Caco-2 (cell line): ENCODE measurements at regions of chr10 and their contacts with region 1.

Region 1: DNA sequence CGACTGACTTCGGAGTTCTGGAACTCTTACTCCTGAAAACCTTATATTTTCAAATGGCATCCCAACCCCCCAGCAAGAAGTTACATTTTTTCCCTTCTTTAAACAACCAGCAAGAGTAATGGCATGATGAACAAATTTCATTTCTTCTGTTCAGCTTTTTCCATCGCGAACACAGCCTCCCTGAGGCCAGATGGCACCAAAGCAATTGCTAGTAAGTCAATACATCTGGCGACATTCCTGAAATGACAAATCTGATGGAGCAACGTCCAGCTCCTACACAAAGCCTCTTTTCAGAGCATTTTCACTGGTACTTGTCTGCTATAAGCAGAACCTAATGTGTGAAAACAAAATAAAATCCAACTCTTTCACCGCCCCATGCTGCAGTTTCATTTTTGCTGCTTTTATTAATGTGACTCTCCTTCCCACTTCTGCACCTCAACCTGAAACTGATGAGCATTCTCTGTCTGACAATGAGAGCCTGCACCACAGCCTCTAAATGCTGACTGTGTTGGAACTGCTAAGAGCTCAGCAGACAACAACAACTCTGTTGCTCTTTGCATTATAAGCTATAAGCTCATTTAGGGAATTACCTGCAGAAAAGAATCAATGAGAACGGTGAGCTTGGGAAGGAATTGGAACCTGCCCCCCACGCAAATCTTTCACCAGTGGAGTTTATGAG is 229.8 kb downstream of the FGFR2 start:
- DNase-seq: peak; percentile 81 to 83
- H3K4me3 ChIP-seq: peak overlapping the region; percentile 7; the same call in 1 of the 2 replicates
- H3K4me3 Mint-ChIP-seq: peak overlapping the region; percentile 71
- H3K27ac Mint-ChIP-seq: peak overlapping the region; percentile 87
- H3K4me1 ChIP-seq: peaks cover 49% of the 10 kb centered on the region
- H3K4me1 Mint-ChIP-seq: peaks cover 43% of the 10 kb centered on the region
- H3K27me3 ChIP-seq: no peaks in the 10 kb centered on the region
- H3K27me3 Mint-ChIP-seq: no peaks in the 10 kb centered on the region
- CTCF ChIP-seq: peak in 1 of 2 experiments; percentile 22

Region 2: GRCh38 chr10:121096617-121097461 is 271.6 kb before region 1 on chr10:
- CTCF ChIA-PET with region 1: no interaction called
- POLR2A ChIA-PET with region 1: no interaction called
- intact Hi-C with region 1: loop called (anchors 5 kb)
- DNase-seq: peak; percentile 86 to 87
- H3K4me3 ChIP-seq: no peak overlapping the region
- H3K4me3 Mint-ChIP-seq: peak overlapping the region; percentile 48
- H3K27ac Mint-ChIP-seq: peak overlapping the region; percentile 90
- H3K4me1 ChIP-seq: peaks cover 51% of the 10 kb centered on the region
- H3K4me1 Mint-ChIP-seq: peaks cover 38% of the 10 kb centered on the region
- H3K27me3 ChIP-seq: no peaks in the 10 kb centered on the region
- H3K27me3 Mint-ChIP-seq: no peaks in the 10 kb centered on the region
- CTCF ChIP-seq: no peak

Region 3: DNA sequence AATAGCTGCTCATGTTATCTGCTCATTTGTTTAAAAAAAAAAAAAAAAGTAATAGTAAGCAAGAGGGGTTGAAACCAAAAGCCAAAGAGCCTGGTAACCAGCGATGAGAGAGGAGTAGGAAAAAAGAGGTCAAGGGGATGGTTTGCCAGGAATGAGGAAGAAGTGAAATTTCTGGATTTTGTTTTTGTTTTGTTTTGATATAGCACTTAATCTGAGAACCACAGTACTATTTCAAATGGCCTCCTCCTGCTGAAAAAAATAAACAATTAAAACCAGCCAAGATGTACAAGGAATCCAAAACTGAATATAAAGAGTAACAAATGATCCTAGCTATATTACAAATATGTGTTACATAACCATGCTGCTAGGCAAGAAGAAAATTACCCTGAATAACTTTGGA is 16.6 kb after region 1 on chr10:
- CTCF ChIA-PET with region 1: no interaction called
- POLR2A ChIA-PET with region 1: no interaction called
- intact Hi-C with region 1: no loop called
- DNase-seq: no peak
- H3K4me3 ChIP-seq: no peak overlapping the region
- H3K4me3 Mint-ChIP-seq: no peak overlapping the region
- H3K27ac Mint-ChIP-seq: no peak overlapping the region
- H3K4me1 ChIP-seq: peaks cover 7% of the 10 kb centered on the region
- H3K4me1 Mint-ChIP-seq: peaks cover 3% of the 10 kb centered on the region
- H3K27me3 ChIP-seq: no peaks in the 10 kb centered on the region
- H3K27me3 Mint-ChIP-seq: no peaks in the 10 kb centered on the region
- CTCF ChIP-seq: no peak

Region 4: DNA sequence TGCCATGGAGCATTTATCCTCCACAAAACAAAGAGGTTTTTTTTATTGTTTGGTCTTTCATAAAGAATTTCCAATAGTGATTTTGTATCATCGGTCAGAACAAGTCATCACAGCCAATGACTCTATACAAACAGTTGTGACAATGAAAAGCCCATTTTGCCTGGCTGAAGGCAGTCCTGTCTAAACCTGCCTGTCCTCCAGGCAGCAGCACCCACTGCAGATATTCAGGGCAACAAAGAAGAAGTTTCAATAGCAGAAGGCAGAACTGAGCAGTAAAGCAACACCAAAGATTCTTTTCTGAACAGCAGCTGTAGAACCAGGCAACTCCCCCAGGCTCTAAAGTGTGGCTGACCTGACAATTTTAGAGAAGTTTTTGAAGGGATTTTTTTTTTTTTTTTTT is 60.4 kb after region 1 on chr10:
- CTCF ChIA-PET with region 1: interaction called, 3 read pairs
- POLR2A ChIA-PET with region 1: no interaction called
- intact Hi-C with region 1: loop called (anchors 1 kb)
- DNase-seq: peak; percentile 48 to 49
- H3K4me3 ChIP-seq: no peak overlapping the region
- H3K4me3 Mint-ChIP-seq: no peak overlapping the region
- H3K27ac Mint-ChIP-seq: no peak overlapping the region
- H3K4me1 ChIP-seq: peaks cover 51% of the 10 kb centered on the region
- H3K4me1 Mint-ChIP-seq: peaks cover 28% of the 10 kb centered on the region
- H3K27me3 ChIP-seq: no peaks in the 10 kb centered on the region
- H3K27me3 Mint-ChIP-seq: no peaks in the 10 kb centered on the region
- CTCF ChIP-seq: peak in 1 of 2 experiments; percentile 15

Region 5: GRCh38 chr10:121500674-121501332 is 132.3 kb after region 1 on chr10:
- CTCF ChIA-PET with region 1: no interaction called
- POLR2A ChIA-PET with region 1: no interaction called
- intact Hi-C with region 1: loop called (anchors 2 kb)
- DNase-seq: peak; percentile 89 to 94
- H3K4me3 ChIP-seq: no peak overlapping the region
- H3K4me3 Mint-ChIP-seq: peak overlapping the region; percentile 56
- H3K27ac Mint-ChIP-seq: peak overlapping the region; percentile 90
- H3K4me1 ChIP-seq: peaks cover 47% of the 10 kb centered on the region
- H3K4me1 Mint-ChIP-seq: peaks cover 32% of the 10 kb centered on the region
- H3K27me3 ChIP-seq: no peaks in the 10 kb centered on the region
- H3K27me3 Mint-ChIP-seq: no peaks in the 10 kb centered on the region
- CTCF ChIP-seq: no peak

Region 6: DNA sequence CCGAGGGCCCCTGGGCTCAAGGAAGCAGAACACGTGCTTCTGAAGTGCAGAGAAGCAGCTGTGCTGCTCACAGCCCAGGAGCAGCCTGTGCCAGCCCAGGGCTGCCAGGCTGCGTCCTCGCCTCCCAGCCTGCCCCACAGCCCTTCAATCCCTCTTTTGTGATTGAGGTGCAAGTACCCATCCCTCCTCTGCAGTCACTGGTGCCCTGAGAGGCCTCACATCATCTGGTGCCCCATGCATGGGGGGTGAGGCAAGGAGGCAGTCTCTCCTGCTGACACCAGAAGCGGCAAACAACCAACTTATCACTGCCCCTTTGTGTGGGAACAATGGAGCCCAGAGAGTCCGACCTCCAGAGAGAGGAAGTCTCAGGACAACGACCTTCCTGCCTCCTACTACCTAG is 279.6 kb after region 1 on chr10:
- CTCF ChIA-PET with region 1: no interaction called
- POLR2A ChIA-PET with region 1: no interaction called
- intact Hi-C with region 1: no loop called
- DNase-seq: no peak
- H3K4me3 ChIP-seq: no peak overlapping the region
- H3K4me3 Mint-ChIP-seq: no peak overlapping the region
- H3K27ac Mint-ChIP-seq: no peak overlapping the region
- H3K4me1 ChIP-seq: peaks cover 7% of the 10 kb centered on the region; the same call in 1 of the 2 replicates
- H3K4me1 Mint-ChIP-seq: peaks cover 12% of the 10 kb centered on the region
- H3K27me3 ChIP-seq: no peaks in the 10 kb centered on the region
- H3K27me3 Mint-ChIP-seq: no peaks in the 10 kb centered on the region
- CTCF ChIP-seq: no peak